Caco-2 (cell line): ENCODE measurements at regions of chr19 and their contacts with region 1.

Region 1: DNA sequence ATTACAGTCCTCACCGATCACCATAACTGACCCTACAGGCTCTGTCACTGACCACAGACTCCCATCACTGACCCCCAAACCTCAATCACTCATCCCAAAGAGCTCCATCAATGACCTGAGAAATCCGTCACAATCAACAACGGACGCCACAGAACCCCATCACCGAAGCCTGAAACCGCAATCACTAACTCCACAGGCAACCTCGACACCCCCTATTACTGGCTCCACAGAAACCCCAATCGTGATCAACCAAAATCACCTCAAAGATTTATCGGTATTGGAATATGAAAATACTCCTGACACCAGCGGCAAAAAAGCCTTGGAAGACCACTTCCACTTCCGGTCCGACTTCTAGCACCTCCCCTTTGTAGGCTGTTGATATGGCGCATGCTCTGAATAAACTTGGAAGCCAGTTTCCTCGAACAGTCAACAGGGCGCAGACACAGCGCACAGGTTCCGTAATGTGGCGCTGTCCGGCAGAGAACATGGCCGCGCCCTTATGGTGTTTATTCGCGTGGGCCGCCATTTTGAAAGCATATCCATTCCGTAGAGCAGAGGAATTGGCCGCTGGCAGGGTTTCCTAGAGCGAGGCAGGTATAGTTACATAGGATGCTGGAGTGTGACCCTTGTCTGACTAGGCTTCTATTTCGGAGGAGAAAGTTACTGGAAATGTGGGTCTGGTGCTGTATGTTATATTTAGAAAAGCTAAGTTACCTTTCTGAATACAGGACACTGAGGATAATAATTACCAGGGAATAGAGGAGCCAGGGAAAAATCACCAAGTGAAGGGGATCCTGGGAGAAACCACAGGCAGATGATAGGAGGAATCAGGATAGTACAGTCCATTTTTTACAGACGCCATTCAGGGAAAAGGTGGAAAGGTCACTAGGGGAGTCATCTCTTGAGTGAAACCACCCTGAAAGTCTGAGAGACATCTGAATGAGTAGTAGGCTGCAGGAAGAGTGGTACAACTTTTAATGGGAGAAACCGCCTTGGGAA is at the start of gene ZNF585A:
- DNase-seq: peak; percentile 86 to 93
- H3K4me3 ChIP-seq: peak within 1 kb of the TSS; percentile 55
- H3K4me3 Mint-ChIP-seq: no peak within 1 kb of the TSS
- H3K27ac Mint-ChIP-seq: no peak within 1 kb of the TSS
- H3K4me1 ChIP-seq: no peaks in the 10 kb centered on the region
- H3K4me1 Mint-ChIP-seq: no peaks in the 10 kb centered on the region
- H3K27me3 ChIP-seq: no peaks in the 10 kb centered on the region
- H3K27me3 Mint-ChIP-seq: no peaks in the 10 kb centered on the region
- CTCF ChIP-seq: peak in 1 of 2 experiments; percentile 39
- total RNA-seq, gene ZNF585A: 4.3 and 7.3 TPM in 2 replicates

Region 2: DNA sequence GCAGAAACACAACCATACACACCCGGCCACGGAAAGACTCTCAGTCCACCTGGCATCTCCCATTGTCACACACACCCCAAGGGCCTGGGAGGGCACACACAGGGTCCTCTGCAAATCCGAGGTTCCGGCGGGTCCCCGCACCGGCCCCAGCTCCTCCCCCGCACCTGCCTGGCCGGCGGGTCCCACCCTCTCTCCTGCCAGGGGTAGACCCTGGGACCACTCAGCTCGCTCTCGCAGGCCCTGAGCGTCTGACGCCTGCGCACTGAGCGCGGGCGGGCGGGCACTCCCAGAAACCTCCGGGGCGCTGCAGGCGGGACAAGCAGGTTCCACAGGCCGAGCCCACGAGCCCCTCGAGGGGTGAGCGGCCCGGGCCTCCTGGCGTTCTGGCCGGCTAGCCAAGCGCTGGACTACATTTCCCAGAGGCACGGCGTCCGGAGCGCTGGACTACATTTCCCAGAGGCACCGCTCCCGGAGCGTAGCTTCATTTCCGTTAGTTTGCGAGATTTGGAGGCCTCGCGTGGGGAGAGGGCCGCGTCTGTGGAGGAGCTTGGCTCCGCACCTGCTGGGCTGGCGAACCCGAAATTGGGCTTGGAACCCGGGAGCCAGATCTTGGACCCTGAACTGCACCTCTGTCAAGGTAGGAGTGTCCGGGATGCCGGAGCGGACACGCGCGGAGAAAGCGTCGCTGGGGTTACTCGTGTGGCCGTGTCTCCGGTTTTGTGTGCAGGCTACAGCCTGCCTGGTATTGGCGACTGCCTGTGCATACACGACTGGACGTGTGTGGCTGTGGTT is 94.5 kb before region 1 on chr19 and contains the start of gene ZNF420:
- CTCF ChIA-PET with region 1: no interaction called
- POLR2A ChIA-PET with region 1: no interaction called
- intact Hi-C with region 1: loop called (anchors 1 kb)
- DNase-seq: peak; percentile 88 to 93
- H3K4me3 ChIP-seq: peak within 1 kb of the TSS; percentile 63
- H3K4me3 Mint-ChIP-seq: peak within 1 kb of the TSS; percentile 84
- H3K27ac Mint-ChIP-seq: peak within 1 kb of the TSS; percentile 83
- H3K4me1 ChIP-seq: no peaks in the 10 kb centered on the region
- H3K4me1 Mint-ChIP-seq: peaks cover 7% of the 10 kb centered on the region
- H3K27me3 ChIP-seq: no peaks in the 10 kb centered on the region
- H3K27me3 Mint-ChIP-seq: no peaks in the 10 kb centered on the region
- CTCF ChIP-seq: no peak
- total RNA-seq, gene ZNF420: 3.2 and 3.3 TPM in 2 replicates